Gastrocnemius medialis (tissue), 4 donors: ENCODE measurements at regions of chr6 and their contacts with region 1.

Region 1: DNA sequence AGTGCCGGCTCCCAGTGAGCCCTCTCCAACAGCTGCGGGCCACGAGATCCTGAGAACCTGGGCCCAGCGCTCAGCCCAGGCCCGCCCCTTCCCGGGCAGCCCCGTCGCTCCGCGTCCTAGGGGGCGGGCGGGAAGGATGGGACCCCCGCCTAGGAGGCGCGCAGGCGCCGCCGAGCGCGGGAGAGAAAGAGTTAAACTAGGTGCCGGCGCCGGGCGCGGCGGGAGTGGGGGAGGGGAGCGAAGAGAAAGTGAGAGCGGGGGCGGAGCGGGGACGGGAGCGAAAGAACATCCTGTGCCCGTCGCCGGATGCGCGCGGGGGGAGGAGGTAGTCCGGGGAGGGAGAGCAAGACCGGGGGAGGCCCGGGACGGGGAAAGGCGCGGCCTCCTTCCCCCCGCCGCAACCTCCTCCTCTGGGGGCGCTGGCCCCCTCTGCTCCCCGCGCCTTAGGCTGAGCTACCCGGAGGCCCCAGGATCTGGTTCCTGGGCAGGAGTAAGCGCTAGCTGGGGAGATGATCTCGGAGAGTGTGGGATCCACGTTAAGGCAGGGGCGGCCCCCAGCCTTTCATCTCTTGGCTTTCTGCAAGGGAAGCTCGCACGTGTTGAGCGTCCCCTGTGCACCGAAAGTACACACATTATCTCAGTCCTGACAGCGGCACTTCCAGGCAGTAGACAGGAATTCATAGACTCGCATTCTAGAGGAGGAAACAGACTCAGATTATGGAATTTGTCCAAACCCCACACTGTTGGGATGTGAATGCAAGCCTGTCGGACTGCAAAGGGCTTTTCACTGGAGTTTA is 4.9 kb upstream of the ARMC12 start:
- DNase-seq: peak; percentile 98
- ATAC-seq: peak; percentile 40 to 42
- H3K4me3 ChIP-seq: peak overlapping the region; percentile 70 to 94 (median 82)
- H3K27ac ChIP-seq: peak overlapping the region; percentile 99 to 100 (median 100)
- H3K4me1 ChIP-seq: peaks cover 62 to 69% of the 10 kb centered on the region in 2 donors
- H3K27me3 ChIP-seq: no peaks in the 10 kb centered on the region
- CTCF ChIP-seq: no peak
- POLR2A ChIP-seq: no peak

Region 2: DNA sequence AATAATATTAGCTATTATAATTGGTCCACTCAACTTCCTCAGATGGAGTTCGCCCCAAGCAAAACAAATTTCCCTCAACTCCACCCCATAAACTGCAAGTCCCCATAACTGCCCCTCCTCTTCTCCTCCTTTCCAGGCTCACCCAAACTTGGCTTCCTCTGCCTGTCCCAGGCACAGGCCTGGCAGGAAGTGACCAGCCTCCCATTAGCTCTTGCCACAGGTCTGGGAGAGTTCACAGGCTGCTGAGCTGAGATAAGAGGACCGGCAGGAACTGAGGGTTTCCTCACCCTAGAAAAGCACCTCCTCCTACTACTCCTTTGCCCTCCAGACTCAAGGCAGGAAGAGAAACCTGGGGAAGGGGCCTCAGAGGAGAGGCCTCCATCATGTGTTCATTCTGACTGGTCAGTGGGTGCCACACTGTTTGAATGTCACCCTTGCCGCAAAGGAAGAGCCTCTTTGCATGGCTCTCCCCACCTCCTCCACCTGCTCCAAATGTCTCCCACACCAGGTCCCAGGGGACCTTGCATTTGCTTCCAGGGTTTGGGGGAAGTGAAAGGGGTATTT is 1458.6 kb before region 1 on chr6:
- in situ Hi-C with region 1: no loop called
- intact Hi-C with region 1: loop called (anchors 5 kb)
- DNase-seq: no peak
- ATAC-seq: no peak
- H3K4me3 ChIP-seq: no peak overlapping the region
- H3K27ac ChIP-seq: peak overlapping the region; percentile 7 to 55 (median 37)
- H3K4me1 ChIP-seq: peaks cover 32 to 36% of the 10 kb centered on the region in 2 donors
- H3K27me3 ChIP-seq: no peaks in the 10 kb centered on the region
- CTCF ChIP-seq: no peak
- POLR2A ChIP-seq: no peak

Region 3: DNA sequence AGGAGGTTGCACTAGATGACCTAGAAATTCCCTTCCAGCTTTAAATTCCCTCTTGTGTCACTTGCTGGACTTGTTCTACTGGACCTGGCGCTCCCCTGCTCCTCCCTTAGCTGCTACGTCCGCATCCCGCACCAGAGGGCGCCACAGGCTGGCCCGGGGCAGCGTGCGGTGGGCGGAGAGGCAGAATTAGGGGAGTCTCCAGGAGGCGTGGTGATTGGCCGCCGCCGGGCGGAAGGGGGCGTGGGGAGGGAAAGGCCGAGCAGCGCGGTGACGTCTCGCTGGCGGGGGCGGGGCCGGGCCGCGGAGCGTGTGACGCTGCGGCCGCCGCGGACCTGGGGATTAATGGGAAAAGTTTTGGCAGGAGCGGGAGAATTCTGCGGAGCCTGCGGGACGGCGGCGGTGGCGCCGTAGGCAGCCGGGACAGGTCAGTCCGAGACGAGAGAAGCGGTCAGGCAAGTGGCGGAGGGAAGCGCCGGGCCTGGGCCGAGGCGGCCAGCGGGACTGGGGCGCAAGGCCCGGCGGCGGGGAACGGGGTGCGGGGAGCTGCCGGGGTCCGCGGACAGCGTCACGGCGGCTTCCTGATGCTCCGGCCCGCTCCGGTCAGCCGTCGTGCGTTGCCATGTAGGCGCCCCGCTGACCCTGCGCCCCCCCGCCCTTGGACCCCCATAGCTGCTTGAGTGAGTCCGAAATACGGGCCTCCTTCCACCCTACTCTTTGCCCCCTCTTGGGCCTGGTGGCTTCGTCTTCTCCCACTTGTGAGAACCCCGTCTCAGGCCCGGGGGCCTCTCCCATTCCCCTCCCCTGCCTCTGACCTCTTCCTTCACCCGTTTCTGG is 389.5 kb before region 1 on chr6 and contains the start of gene PPARD:
- in situ Hi-C with region 1: no loop called
- intact Hi-C with region 1: loop called (anchors 5 kb)
- DNase-seq: peak; percentile 97 to 98
- ATAC-seq: peak; percentile 88 to 92
- H3K4me3 ChIP-seq: peak within 1 kb of the TSS; percentile 64 to 93 (median 70)
- H3K27ac ChIP-seq: peak within 1 kb of the TSS; percentile 81 to 95 (median 94)
- H3K4me1 ChIP-seq: peaks cover 41 to 45% of the 10 kb centered on the region in 2 donors
- H3K27me3 ChIP-seq: no peaks in the 10 kb centered on the region
- CTCF ChIP-seq: peak; percentile 97 to 100 (median 99)
- POLR2A ChIP-seq: peak; percentile 96 to 97
- total RNA-seq, gene PPARD: 6.3 to 16.7 (median 12.0) TPM

Region 4: DNA sequence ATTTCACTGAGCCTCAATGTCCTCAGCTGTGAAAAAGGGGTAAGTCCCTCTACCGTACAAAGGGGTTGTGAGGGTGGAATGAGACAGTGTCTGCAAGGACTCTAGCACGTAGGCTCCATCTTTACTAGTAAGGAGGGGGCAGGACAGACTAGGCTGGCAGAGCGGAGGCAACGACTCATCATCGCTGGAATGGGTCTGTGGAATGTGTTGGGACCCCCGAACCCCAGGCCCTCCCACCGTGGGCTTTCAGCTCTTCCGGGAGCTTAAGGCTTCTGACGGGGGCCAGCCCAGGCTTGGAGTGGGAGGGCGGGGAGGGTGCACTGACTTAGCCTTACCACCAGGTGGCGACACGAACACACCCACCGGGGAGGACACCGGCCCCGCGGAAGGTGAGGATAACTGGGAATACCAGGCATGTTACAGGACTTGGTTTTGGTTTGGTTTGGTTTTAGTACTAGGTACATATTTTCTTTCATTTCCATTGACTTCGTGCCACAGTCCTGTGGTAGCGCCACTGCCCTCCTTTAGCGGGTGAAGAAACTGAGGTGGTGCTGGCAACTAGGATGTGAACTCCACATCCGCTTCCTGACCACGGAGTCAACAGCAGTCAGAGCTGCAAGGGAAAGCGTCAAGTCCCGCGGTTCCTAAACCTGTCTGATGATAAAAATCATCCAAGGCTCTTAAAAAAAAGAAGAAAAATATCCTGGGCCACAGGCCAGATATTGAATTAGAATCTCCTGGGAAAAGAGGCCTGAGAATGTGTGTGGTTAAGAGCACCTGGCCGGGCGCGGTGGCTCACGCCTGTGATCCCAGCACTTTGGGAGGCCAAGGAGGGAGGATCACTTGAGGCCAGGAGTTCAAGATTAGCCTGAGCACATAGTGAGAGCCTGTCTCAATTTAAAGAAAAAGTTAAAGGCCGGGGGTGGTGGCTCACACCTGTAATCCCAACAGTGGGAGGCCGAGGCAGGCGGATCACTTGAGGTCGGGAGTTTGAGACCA is 209.0 kb before region 1 on chr6:
- in situ Hi-C with region 1: loop called (anchors 5 kb)
- intact Hi-C with region 1: loop called (anchors 1 kb)
- DNase-seq: peak; percentile 41 to 63
- ATAC-seq: peak; percentile 85 to 96
- H3K4me3 ChIP-seq: peak overlapping the region in 3 of 4 donors; percentile 11 to 33 (median 29)
- H3K27ac ChIP-seq: no peak overlapping the region
- H3K4me1 ChIP-seq: no peaks in the 10 kb centered on the region
- H3K27me3 ChIP-seq: no peaks in the 10 kb centered on the region
- CTCF ChIP-seq: peak; percentile 84 to 100 (median 98)
- POLR2A ChIP-seq: no peak

Region 5: DNA sequence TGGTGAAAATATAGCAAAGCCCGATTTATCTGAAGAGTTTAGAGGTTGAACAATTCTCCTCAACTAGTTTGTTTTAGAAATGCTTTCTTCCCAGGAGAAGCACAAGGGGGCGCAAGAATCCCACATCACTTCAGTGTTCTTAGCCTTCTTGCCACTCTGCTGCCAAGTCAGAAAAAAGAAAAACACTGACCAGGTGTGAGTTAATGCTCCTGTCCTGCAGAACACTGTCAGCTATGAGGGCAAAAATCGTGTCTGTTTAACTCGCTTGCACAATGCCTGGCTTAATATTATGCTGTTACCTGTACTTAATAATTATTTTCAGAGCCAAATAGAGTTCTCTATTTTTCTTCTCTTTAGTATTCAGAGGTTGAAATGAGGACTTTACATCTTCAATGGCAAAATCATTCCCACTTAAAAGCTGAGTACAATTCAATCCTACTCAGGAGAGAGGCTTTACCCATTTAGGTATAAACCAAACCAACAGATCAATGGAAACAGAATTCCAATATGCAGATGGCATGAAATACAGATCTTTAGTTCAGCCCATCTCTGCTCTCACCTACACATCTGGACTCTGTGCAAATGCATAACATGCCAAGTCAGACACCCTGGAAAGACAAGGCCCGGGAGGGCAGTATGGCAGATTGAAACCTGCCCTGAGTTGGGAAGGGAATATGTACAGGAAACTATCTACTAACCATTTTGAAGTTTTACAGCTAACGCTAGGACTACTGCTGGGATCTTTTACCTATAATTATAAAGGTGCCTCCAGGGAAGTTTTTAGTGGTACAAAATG is 147.8 kb before region 1 on chr6:
- in situ Hi-C with region 1: loop called in 2 of 4 experiments (anchors 5 to 10 kb)
- intact Hi-C with region 1: loop called (anchors 2 kb)
- DNase-seq: peak in 1 of 2 donors; percentile 60
- ATAC-seq: peak; percentile 24 to 37
- H3K4me3 ChIP-seq: no peak overlapping the region
- H3K27ac ChIP-seq: peak overlapping the region; percentile 89 to 99 (median 92)
- H3K4me1 ChIP-seq: peaks cover 52 to 71% of the 10 kb centered on the region in 2 donors
- H3K27me3 ChIP-seq: no peaks in the 10 kb centered on the region
- CTCF ChIP-seq: peak; percentile 56 to 78 (median 70)
- POLR2A ChIP-seq: no peak

Region 6: DNA sequence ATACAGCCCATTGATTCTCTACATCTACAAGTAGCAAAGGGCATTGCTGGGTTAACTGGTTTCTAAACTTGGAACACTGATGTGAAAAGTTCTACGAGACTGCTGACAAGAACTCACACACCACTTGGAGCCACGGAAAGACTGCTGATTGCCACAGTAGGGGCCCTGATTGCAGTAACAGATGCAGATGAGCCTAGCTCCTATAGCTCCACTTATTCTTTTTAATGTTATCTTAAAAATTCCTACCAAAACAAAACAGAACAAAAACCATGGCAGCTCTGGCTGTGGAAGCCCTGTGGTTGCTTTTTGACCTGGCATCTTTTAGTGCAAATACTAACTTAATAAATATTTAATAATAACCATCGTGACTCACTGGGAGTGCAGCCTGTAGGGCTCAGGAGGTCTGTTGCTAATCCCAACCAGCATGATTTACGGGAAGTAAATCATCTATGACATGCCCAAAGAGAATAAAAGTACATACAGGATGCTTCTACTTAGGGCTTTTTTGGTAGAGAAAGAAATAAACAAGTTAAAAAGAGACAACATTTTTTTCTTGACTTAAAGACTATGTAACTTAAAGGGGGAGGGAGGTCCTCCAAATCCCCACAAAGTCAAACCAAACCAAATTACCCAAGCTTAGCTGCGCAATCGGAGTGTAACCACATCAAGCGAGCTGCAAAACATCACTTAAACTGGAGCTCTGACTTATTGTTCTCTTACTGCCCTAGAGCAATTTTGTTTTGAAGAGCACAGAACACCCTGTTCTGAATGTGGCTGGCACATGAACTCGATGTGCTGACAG is 130.4 kb before region 1 on chr6:
- in situ Hi-C with region 1: loop called in 2 of 4 experiments (anchors 5 to 10 kb)
- intact Hi-C with region 1: loop called (anchors 1 kb)
- DNase-seq: peak; percentile 83 to 88
- ATAC-seq: peak; percentile 74 to 75
- H3K4me3 ChIP-seq: peak overlapping the region in 3 of 4 donors; percentile 6 to 27 (median 22)
- H3K27ac ChIP-seq: peak overlapping the region; percentile 89 to 99 (median 92)
- H3K4me1 ChIP-seq: peaks cover 85 to 99% of the 10 kb centered on the region in 2 donors
- H3K27me3 ChIP-seq: no peaks in the 10 kb centered on the region
- CTCF ChIP-seq: no peak
- POLR2A ChIP-seq: peak in 1 of 2 donors; percentile 54

Region 7: GRCh38 chr6:36098920-36099647 is 367.1 kb after region 1 on chr6:
- in situ Hi-C with region 1: no loop called
- intact Hi-C with region 1: no loop called
- DNase-seq: no peak
- ATAC-seq: no peak
- H3K4me3 ChIP-seq: no peak overlapping the region
- H3K27ac ChIP-seq: no peak overlapping the region
- H3K4me1 ChIP-seq: peaks cover 11 to 13% of the 10 kb centered on the region in 2 donors
- H3K27me3 ChIP-seq: no peaks in the 10 kb centered on the region
- CTCF ChIP-seq: no peak
- POLR2A ChIP-seq: no peak

Region 8: GRCh38 chr6:36678518-36679027 is 946.6 kb after region 1 on chr6 and contains the start of gene CDKN1A:
- in situ Hi-C with region 1: no loop called
- intact Hi-C with region 1: loop called (anchors 5 kb)
- DNase-seq: peak; percentile 86 to 94
- ATAC-seq: peak; percentile 38 to 61
- H3K4me3 ChIP-seq: peak within 1 kb of the TSS; percentile 91 to 97 (median 93)
- H3K27ac ChIP-seq: peak within 1 kb of the TSS; percentile 99 to 100 (median 100)
- H3K4me1 ChIP-seq: peaks cover 26 to 37% of the 10 kb centered on the region in 2 donors
- H3K27me3 ChIP-seq: no peaks in the 10 kb centered on the region
- CTCF ChIP-seq: peak in 3 of 5 experiments; percentile 21 to 45 (median 28)
- POLR2A ChIP-seq: peak; percentile 99 to 100
- total RNA-seq, gene CDKN1A: 110 to 346 (median 260) TPM